Activated CD4-positive, alpha-beta T cell treated with anti-CD3 and anti-CD28 coated beads for 36 hours (primary cell): ENCODE measurements at regions of chr3 and their contacts with region 1.

Region 1: GRCh38 chr3:126858887-126859286 is 124.0 kb upstream of the PLXNA1 start:
- DNase-seq: peak; percentile 14
- ATAC-seq: peak; percentile 44
- H3K4me3 Mint-ChIP-seq: no peak overlapping the region
- H3K27ac Mint-ChIP-seq: no peak overlapping the region
- H3K4me1 Mint-ChIP-seq: no peaks in the 10 kb centered on the region
- H3K27me3 Mint-ChIP-seq: no peaks in the 10 kb centered on the region

Region 2: GRCh38 chr3:126646674-126647073 is 212.2 kb before region 1 on chr3:
- CTCF ChIA-PET with region 1: no interaction called
- POLR2A ChIA-PET with region 1: no interaction called
- intact Hi-C with region 1: no loop called
- DNase-seq: no peak
- ATAC-seq: no peak
- H3K4me3 Mint-ChIP-seq: no peak overlapping the region
- H3K27ac Mint-ChIP-seq: no peak overlapping the region
- H3K4me1 Mint-ChIP-seq: no peaks in the 10 kb centered on the region
- H3K27me3 Mint-ChIP-seq: peaks cover 5% of the 10 kb centered on the region

Region 3: DNA sequence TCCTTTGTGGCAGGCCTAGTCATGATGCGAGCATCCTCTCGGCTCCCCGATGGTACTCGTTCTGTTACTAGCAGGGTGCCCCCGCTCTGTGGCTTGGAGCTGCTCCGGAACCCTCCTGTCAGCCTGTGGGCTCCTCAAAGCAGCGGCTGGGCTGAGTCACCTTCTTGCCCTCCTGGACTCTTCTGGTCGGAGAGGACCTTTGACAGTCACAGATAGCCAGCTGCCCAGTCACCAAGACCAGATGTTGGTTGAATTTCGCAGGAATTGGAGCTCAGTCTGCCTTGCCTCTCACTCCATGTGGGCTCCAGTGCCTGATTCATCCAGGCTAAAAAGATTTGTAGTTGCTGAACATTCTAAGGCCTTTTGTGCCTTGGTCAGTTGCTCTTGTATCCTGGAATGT is 60.4 kb before region 1 on chr3:
- CTCF ChIA-PET with region 1: no interaction called
- POLR2A ChIA-PET with region 1: no interaction called
- intact Hi-C with region 1: loop called in 1 of 2 experiments (anchors 10 kb)
- DNase-seq: no peak
- ATAC-seq: no peak
- H3K4me3 Mint-ChIP-seq: no peak overlapping the region
- H3K27ac Mint-ChIP-seq: no peak overlapping the region
- H3K4me1 Mint-ChIP-seq: no peaks in the 10 kb centered on the region
- H3K27me3 Mint-ChIP-seq: no peaks in the 10 kb centered on the region